ENCODE measurements at regions of chr2 and their contacts with region 1.

Region 1: DNA sequence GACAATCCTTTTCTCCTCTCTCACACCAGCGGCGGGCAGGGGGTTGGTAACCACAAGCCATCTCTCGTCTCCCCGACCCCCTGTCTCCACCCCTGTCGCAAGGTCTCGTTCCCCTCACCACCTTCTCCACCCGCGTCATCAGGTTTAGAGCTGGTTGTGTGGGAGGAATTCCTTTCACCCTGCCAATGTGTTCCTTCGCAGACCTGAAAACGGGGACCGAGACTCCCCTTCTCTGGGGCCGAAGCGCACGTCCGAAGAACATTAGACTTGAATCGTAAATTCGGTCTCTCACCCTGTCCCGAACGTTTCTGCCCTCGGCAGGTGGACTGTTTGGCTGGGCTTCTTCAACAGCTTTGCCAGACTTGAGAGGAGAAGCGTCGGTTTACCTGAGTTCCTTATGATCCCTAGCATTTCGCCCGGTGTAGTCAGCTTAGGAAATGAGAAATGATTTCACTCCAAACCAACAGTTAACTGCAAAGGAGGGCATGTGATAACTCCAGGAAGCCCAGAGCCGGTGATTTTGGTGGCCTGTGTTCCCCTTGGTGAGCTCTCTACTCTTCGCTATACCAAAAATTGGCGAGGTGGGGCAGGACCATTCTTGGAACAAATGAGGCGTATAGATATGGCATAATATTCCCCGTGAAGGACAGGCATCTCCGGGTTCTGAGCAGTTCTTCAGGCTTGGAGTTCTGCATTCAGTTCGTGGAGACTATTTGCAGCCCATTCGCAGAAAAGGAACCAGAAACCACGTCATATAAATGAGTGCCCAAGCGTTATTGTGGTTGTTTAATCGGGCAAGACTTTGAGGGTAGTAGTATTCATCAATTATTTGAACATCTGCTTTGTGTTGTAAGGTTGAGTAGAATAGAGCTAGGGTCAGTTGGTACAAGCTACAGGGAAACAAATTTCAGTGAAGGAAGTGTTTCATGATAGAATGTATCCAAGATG is 694 bp downstream of the CFAP36 start:
- DNase-seq: peak; percentile 57
- ATAC-seq: peak; percentile 13
- H3K4me3 ChIP-seq: peak overlapping the region; percentile 63 to 92 (median 87)
- H3K4me3 Mint-ChIP-seq: peak overlapping the region; percentile 86
- H3K27ac ChIP-seq: peak overlapping the region; percentile 79 to 93
- H3K27ac Mint-ChIP-seq: peak overlapping the region; percentile 96
- H3K4me1 ChIP-seq: peaks cover 9 to 12% of the 10 kb centered on the region in 2 donors
- H3K4me1 Mint-ChIP-seq: peaks cover 14% of the 10 kb centered on the region
- H3K27me3 ChIP-seq: no peaks in the 10 kb centered on the region
- H3K27me3 Mint-ChIP-seq: no peaks in the 10 kb centered on the region
- CTCF ChIP-seq: no peak

Region 2: DNA sequence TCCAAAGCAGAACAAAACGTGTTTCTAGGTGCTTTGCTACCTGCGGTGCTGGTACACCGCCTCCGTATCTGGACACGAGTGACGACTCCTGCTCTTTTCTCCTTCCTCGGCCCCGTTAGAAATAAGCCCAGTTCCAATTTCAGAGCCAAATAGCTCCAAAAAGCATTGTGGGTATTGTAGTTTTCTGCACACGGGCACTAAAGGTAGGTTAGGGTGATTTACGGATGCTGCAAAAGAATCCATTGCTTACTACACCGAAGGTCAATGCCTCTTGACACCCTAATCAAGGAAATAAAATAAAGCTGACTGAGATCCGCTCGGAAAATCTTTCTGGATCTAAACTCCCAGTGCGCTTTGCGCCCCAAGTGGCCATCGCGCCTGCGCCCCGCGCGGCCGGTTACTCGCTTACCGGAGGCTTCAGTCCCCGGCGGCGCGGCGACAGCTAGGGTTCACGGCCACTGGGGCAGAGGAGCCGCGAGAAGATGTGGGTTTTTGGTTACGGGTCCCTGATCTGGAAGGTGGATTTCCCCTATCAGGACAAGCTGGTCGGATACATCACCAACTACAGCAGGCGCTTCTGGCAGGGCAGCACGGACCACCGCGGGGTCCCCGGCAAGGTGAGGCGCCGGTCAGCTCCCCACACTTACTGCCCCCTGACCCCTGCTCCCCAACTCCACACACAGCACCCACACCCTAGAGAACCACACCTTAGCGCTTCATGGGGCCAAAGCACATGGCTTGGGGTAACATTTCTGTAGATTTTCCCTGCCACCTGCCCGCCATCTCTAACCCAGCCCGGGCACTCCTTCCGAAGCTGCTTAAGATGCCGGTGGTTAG is 1752.6 kb before region 1 on chr2 and contains the start of gene CHAC2:
- CTCF ChIA-PET with region 1: no interaction called
- POLR2A ChIA-PET with region 1: no interaction called
- intact Hi-C with region 1: loop called (anchors 5 kb)
- DNase-seq: peak; percentile 93
- ATAC-seq: peak; percentile 93
- H3K4me3 ChIP-seq: peak within 1 kb of the TSS; percentile 81 to 99 (median 89)
- H3K4me3 Mint-ChIP-seq: peak within 1 kb of the TSS; percentile 89
- H3K27ac ChIP-seq: peak within 1 kb of the TSS; percentile 93 to 97
- H3K27ac Mint-ChIP-seq: peak within 1 kb of the TSS; percentile 95
- H3K4me1 ChIP-seq: peaks cover 7 to 10% of the 10 kb centered on the region in 2 donors
- H3K4me1 Mint-ChIP-seq: peaks cover 31% of the 10 kb centered on the region
- H3K27me3 ChIP-seq: no peaks in the 10 kb centered on the region
- H3K27me3 Mint-ChIP-seq: no peaks in the 10 kb centered on the region
- CTCF ChIP-seq: no peak
- total RNA-seq, gene CHAC2: 2.1 and 3.2 TPM in 2 replicates

Region 3: DNA sequence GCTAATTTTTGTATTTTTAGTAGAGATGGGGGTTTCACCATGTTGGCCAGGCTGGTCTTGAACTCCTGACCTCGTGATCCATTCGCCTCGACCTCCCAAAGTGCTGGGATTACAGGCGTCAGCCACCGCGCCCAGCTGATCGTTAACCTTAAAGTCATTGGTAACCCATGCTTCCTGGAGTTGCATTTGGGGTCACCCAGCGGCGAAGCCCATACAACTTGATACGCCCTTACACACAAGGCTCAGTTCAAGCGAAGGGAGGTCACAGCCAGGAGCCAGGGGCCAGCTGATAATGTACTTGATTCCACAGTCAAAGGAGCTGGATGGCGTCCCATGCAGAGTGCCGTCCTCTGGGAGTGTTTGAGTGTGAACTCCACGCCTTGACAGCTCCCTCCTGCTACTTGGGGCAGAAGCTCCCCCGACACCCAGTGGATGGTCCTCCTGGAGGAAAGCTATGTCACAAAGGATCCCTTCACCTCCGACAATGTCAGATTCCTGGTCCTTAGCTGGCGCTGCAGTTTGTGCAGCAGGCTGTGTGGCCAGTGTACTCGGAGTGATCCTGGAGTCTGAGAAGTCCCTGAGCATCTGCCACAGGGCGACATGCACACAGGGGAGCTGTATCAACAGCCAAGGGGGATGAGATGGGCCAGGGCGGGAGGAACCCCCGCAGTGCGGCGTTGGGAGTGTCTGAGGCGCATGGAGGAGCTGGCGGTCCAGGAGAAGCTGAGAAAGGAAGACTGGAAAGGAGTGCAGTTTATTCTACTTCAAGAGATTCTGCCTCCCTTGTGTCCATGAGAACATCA is 296.1 kb before region 1 on chr2:
- CTCF ChIA-PET with region 1: no interaction called
- POLR2A ChIA-PET with region 1: interaction called, 13 read pairs
- intact Hi-C with region 1: no loop called
- DNase-seq: peak; percentile 50
- ATAC-seq: no peak
- H3K4me3 ChIP-seq: peak overlapping the region in 4 of 5 experiments; percentile 54 to 73 (median 68)
- H3K4me3 Mint-ChIP-seq: peak overlapping the region; percentile 83
- H3K27ac ChIP-seq: peak overlapping the region; percentile 77 to 86
- H3K27ac Mint-ChIP-seq: peak overlapping the region; percentile 90
- H3K4me1 ChIP-seq: peaks cover 16 to 24% of the 10 kb centered on the region in 2 donors
- H3K4me1 Mint-ChIP-seq: peaks cover 26% of the 10 kb centered on the region
- H3K27me3 ChIP-seq: no peaks in the 10 kb centered on the region
- H3K27me3 Mint-ChIP-seq: no peaks in the 10 kb centered on the region
- CTCF ChIP-seq: no peak

Region 4: GRCh38 chr2:55268907-55269644 is 251.1 kb before region 1 on chr2 and contains the start of gene MTIF2:
- CTCF ChIA-PET with region 1: no interaction called
- POLR2A ChIA-PET with region 1: no interaction called
- intact Hi-C with region 1: loop called (anchors 1 kb)
- DNase-seq: peak; percentile 91
- ATAC-seq: peak; percentile 90
- H3K4me3 ChIP-seq: peak within 1 kb of the TSS; percentile 70 to 92 (median 82)
- H3K4me3 Mint-ChIP-seq: peak within 1 kb of the TSS; percentile 97
- H3K27ac ChIP-seq: peak within 1 kb of the TSS; percentile 78 to 83
- H3K27ac Mint-ChIP-seq: peak within 1 kb of the TSS; percentile 95
- H3K4me1 ChIP-seq: peaks cover 12 to 14% of the 10 kb centered on the region in 2 donors
- H3K4me1 Mint-ChIP-seq: peaks cover 18% of the 10 kb centered on the region
- H3K27me3 ChIP-seq: no peaks in the 10 kb centered on the region
- H3K27me3 Mint-ChIP-seq: no peaks in the 10 kb centered on the region
- CTCF ChIP-seq: no peak
- total RNA-seq, gene MTIF2: 36.7 and 37.4 TPM in 2 replicates

Region 5: DNA sequence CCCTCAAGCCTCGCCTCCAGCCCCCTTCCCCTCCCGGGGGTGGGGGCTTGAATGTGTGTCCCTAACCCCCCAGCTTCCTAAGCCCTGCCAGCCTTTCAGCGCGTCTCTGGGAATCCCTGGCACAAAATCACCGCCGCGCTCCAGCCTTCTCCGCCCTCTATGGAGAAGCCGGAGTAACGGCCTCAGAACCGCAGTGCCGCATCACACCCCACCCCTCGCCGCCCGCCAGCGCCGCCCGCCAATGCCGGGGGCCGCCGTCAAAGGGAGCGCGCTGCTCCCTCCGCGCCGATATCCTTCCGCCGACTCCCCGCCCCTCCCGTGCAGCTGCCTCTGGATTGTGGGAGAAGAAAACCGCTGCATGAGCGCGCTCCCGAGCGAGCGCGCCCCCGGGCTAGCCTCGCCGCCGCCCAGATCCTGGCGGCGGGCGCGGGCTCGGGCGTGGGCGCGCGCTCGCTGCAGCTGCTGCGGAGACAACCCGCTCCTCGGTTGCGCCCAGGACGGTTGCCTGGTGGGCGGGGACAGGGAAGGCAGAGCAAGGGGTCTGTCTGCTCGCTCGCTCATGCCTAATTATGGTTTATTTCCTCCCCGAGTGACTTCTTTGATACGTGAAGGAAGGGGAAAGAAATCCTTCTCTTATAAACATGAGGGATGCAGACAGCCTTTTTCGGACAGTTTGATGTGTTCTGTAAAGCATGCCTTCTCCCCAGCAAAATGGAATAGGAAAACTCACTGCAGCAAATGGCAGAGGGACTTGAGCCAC is 100.4 kb before region 1 on chr2 and contains the start of gene CCDC88A:
- CTCF ChIA-PET with region 1: interaction called, 3 read pairs
- POLR2A ChIA-PET with region 1: interaction called, 6 read pairs
- intact Hi-C with region 1: loop called (anchors 1 kb)
- DNase-seq: peak; percentile 95
- ATAC-seq: peak; percentile 85
- H3K4me3 ChIP-seq: peak within 1 kb of the TSS; percentile 65 to 91 (median 82)
- H3K4me3 Mint-ChIP-seq: peak within 1 kb of the TSS; percentile 95
- H3K27ac ChIP-seq: peak within 1 kb of the TSS; percentile 68 to 73
- H3K27ac Mint-ChIP-seq: peak within 1 kb of the TSS; percentile 95
- H3K4me1 ChIP-seq: peaks cover 20 to 25% of the 10 kb centered on the region in 2 donors
- H3K4me1 Mint-ChIP-seq: peaks cover 38% of the 10 kb centered on the region
- H3K27me3 ChIP-seq: peaks cover 0 to 4% (median 0%) of the 10 kb centered on the region in 4 experiments
- H3K27me3 Mint-ChIP-seq: no peaks in the 10 kb centered on the region
- CTCF ChIP-seq: no peak
- total RNA-seq, gene CCDC88A: 26.0 and 27.6 TPM in 2 replicates

Region 6: GRCh38 chr2:55500025-55500424 is 20.2 kb before region 1 on chr2:
- CTCF ChIA-PET with region 1: no interaction called
- POLR2A ChIA-PET with region 1: no interaction called
- intact Hi-C with region 1: no loop called
- DNase-seq: no peak
- ATAC-seq: no peak
- H3K4me3 ChIP-seq: no peak overlapping the region
- H3K4me3 Mint-ChIP-seq: no peak overlapping the region
- H3K27ac ChIP-seq: no peak overlapping the region
- H3K27ac Mint-ChIP-seq: no peak overlapping the region
- H3K4me1 ChIP-seq: no peaks in the 10 kb centered on the region
- H3K4me1 Mint-ChIP-seq: no peaks in the 10 kb centered on the region
- H3K27me3 ChIP-seq: no peaks in the 10 kb centered on the region
- H3K27me3 Mint-ChIP-seq: peaks cover 4% of the 10 kb centered on the region
- CTCF ChIP-seq: no peak

Region 7: DNA sequence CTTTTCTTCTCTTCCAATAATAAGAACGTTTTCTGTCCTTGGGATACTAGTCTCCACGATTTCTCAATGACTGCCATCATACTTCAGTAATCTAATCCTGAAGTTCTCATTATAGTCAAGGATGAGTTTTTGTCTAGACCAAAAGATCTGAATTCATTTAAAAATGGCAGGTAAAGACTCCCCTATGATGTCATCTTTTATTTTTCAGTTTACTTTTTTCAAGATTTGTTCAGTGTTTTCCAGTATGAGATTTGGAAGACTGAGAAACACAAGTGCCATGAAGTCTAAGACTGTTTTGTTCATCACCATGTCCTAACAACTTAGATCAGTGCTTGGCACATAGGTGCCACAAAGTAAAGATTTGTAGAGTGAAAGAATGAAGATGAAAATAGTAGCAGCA is 133.0 kb after region 1 on chr2:
- CTCF ChIA-PET with region 1: no interaction called
- POLR2A ChIA-PET with region 1: no interaction called
- intact Hi-C with region 1: no loop called
- DNase-seq: no peak
- ATAC-seq: no peak
- H3K4me3 ChIP-seq: no peak overlapping the region
- H3K4me3 Mint-ChIP-seq: no peak overlapping the region
- H3K27ac ChIP-seq: no peak overlapping the region
- H3K27ac Mint-ChIP-seq: no peak overlapping the region
- H3K4me1 ChIP-seq: no peaks in the 10 kb centered on the region
- H3K4me1 Mint-ChIP-seq: no peaks in the 10 kb centered on the region
- H3K27me3 ChIP-seq: no peaks in the 10 kb centered on the region
- H3K27me3 Mint-ChIP-seq: no peaks in the 10 kb centered on the region
- CTCF ChIP-seq: no peak

Region 8: DNA sequence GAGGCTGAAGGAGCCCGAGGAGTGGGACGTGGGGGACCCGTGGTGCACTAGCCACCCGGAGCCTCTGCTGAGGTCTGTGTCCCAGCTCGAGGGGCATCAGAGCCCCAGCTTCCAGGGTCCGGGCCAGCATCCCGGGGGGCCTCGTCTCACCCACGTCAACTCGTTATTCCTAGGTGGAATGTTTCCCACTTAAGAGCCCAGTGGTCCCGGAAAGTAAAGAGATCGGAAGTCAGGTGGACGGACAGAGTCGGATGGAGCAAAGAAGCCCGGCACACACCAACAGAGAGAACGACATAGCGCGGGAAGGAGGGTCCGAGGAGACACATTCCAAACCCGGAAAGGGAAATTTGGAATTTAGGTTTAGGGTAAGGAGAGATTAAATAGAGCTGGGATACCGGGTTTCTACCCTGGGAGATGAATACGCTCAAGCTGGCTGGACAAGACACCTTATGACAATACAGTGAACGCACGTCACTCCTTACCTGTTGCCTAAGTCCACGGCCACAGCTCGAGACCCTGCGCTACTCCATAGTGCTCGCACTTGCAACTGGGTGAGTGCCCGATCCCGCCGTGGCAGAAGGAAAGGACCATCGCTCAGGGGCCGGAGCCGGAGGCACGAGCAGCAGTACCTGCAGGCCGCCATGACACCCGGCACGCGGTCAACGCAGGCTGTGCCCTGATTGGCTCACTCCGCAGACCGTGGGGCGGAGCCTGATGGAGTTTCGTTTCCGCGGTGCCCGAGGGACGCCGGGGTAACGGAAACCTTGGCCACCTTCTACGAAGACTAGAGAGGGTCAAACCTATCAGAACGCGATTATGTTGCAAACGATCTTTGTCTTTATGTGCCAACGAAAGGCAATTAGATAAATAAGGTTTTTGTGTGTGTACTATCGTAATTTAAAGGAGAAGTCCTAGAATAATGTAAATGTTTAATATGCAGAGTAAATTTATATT is 173.2 kb after region 1 on chr2 and contains the start of gene PNPT1:
- CTCF ChIA-PET with region 1: no interaction called
- POLR2A ChIA-PET with region 1: no interaction called
- intact Hi-C with region 1: loop called (anchors 1 kb)
- DNase-seq: peak; percentile 92
- ATAC-seq: peak; percentile 100
- H3K4me3 ChIP-seq: peak within 1 kb of the TSS; percentile 75 to 97 (median 78)
- H3K4me3 Mint-ChIP-seq: peak within 1 kb of the TSS; percentile 99
- H3K27ac ChIP-seq: peak within 1 kb of the TSS; percentile 8 to 66
- H3K27ac Mint-ChIP-seq: peak within 1 kb of the TSS; percentile 90
- H3K4me1 ChIP-seq: peaks cover 9 to 13% of the 10 kb centered on the region in 2 donors
- H3K4me1 Mint-ChIP-seq: peaks cover 26% of the 10 kb centered on the region
- H3K27me3 ChIP-seq: no peaks in the 10 kb centered on the region
- H3K27me3 Mint-ChIP-seq: peaks cover 2% of the 10 kb centered on the region
- CTCF ChIP-seq: no peak
- total RNA-seq, gene PNPT1: 23.1 and 28.2 TPM in 2 replicates

Region 9: DNA sequence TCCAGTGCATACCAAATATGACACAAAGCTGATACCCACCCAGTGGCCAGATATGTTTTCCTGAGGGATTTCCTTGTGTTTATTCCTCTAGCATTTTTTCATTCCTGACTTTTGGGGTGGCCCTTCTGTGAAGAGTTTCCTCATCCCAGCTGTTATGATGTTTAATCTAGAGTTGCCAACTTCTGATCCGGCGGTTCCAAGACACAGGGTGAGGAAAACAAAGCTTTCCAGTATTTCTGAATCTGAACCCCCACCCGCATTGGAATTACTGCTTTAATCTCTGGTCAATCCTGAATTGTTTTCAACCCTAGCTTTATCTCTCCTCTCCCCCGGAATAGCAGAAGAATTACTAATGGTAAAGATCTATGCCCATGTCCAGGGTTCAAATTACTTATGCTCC is 212.6 kb after region 1 on chr2:
- CTCF ChIA-PET with region 1: no interaction called
- POLR2A ChIA-PET with region 1: no interaction called
- intact Hi-C with region 1: no loop called
- DNase-seq: no peak
- ATAC-seq: no peak
- H3K4me3 ChIP-seq: no peak overlapping the region
- H3K4me3 Mint-ChIP-seq: no peak overlapping the region
- H3K27ac ChIP-seq: no peak overlapping the region
- H3K27ac Mint-ChIP-seq: no peak overlapping the region
- H3K4me1 ChIP-seq: no peaks in the 10 kb centered on the region
- H3K4me1 Mint-ChIP-seq: no peaks in the 10 kb centered on the region
- H3K27me3 ChIP-seq: no peaks in the 10 kb centered on the region
- H3K27me3 Mint-ChIP-seq: no peaks in the 10 kb centered on the region
- CTCF ChIP-seq: no peak

Region 10: DNA sequence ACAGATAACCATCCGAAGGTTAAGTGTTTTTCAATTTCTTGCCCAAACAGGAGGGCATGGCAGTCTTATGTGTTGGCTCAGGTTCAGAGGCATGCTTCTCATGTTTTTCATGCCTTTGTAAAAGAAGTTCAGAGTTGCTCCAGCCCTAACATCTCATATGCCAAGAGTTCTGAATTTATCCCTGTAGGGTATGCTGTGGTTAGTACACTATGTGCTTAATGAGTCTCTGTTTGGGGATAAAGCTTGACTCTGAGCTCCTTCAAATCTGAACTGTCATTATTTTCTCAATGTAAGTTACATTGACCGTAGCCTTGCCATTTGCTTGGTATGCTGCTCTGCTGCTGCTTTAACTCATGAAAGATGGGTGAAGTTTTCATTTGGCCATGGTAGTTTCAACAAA is 241.3 kb after region 1 on chr2:
- CTCF ChIA-PET with region 1: no interaction called
- POLR2A ChIA-PET with region 1: no interaction called
- intact Hi-C with region 1: no loop called
- DNase-seq: no peak
- ATAC-seq: no peak
- H3K4me3 ChIP-seq: no peak overlapping the region
- H3K4me3 Mint-ChIP-seq: no peak overlapping the region
- H3K27ac ChIP-seq: no peak overlapping the region
- H3K27ac Mint-ChIP-seq: no peak overlapping the region
- H3K4me1 ChIP-seq: no peaks in the 10 kb centered on the region
- H3K4me1 Mint-ChIP-seq: no peaks in the 10 kb centered on the region
- H3K27me3 ChIP-seq: peaks cover 0 to 3% (median 1%) of the 10 kb centered on the region in 4 experiments
- H3K27me3 Mint-ChIP-seq: peaks cover 30% of the 10 kb centered on the region
- CTCF ChIP-seq: no peak

Measured in B cell (primary cell).